HCT116 (cell line): ENCODE measurements at regions of chr7 and their contacts with region 1.

Region 1: DNA sequence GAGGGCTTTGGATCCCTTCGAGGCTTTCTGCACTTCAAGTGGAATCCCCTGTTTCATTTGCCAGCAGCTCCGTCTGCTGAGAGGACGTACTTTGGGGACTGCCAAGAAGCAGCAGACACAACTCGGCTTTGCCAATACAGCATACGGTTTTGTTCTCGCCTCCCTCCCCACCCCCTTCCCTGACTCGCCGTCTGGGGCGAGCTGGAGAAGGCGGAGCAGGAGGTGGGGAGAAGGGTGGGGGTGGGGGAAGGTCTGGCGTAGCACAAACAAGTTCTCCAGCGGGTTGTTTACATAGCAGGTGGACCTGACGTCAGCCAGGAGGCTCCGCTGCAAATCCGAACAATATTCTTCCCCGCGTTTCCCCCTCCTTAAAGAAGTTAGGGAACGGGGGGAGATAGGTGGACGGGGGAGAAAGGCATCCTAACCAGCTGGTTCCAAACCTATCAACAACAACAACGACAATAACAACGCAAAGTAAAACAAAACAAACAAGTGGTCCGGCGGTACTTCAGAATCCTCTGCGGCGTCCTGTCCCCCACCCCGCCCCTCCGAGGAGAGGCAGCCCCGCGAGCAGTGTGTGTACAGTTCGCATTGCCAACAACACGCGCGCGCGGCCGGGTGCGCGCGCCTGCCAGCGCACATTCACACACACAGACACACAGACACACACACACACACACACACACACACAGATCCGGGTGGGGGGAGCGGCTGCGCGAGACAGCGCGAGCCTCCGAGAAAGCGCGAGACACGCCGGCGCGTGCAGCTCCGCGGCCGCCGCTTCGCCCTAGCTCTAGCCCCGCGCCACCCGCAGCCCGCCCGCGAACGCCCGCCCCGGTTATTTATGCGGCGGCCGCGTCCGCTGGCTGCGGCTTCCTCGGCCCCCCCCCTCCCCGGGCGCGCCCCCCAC is 167.0 kb upstream of the PPP1R3A start:
- DNase-seq: peak; percentile 64
- ATAC-seq: peak; percentile 79
- H3K4me3 ChIP-seq: peak overlapping the region; percentile 59 to 80
- H3K27ac ChIP-seq: no peak overlapping the region; the same call in 1 of the 2 replicates
- H3K4me1 ChIP-seq: peaks cover 4 to 27% of the 10 kb centered on the region in 2 experiments; a peak in 3 of 4 replicates
- H3K27me3 ChIP-seq: no peaks in the 10 kb centered on the region
- CTCF ChIP-seq: no peak
- POLR2A ChIP-seq: no peak
- RAD21 ChIP-seq: no peak

Region 2: GRCh38 chr7:113179313-113179712 is 906.5 kb before region 1 on chr7:
- CTCF ChIA-PET with region 1: no interaction called
- POLR2A ChIA-PET with region 1: no interaction called
- RAD21 ChIA-PET with region 1: no interaction called
- intact Hi-C with region 1: no loop called
- DNase-seq: no peak
- ATAC-seq: no peak
- H3K4me3 ChIP-seq: no peak overlapping the region
- H3K27ac ChIP-seq: no peak overlapping the region
- H3K4me1 ChIP-seq: no peaks in the 10 kb centered on the region
- H3K27me3 ChIP-seq: no peaks in the 10 kb centered on the region
- CTCF ChIP-seq: no peak
- POLR2A ChIP-seq: no peak
- RAD21 ChIP-seq: no peak

Region 3: GRCh38 chr7:114217026-114217425 is 131.2 kb after region 1 on chr7:
- CTCF ChIA-PET with region 1: no interaction called
- POLR2A ChIA-PET with region 1: no interaction called
- RAD21 ChIA-PET with region 1: interaction called in 1 of 2 experiments, 3 read pairs
- intact Hi-C with region 1: loop called (anchors 2 kb)
- DNase-seq: peak; percentile 7
- ATAC-seq: peak; percentile 62
- H3K4me3 ChIP-seq: no peak overlapping the region
- H3K27ac ChIP-seq: no peak overlapping the region
- H3K4me1 ChIP-seq: no peaks in the 10 kb centered on the region
- H3K27me3 ChIP-seq: no peaks in the 10 kb centered on the region
- CTCF ChIP-seq: peak in 2 of 3 experiments; percentile 24 to 29; a peak in 2 of 6 replicates
- POLR2A ChIP-seq: no peak
- RAD21 ChIP-seq: peak; percentile 54

Region 4: DNA sequence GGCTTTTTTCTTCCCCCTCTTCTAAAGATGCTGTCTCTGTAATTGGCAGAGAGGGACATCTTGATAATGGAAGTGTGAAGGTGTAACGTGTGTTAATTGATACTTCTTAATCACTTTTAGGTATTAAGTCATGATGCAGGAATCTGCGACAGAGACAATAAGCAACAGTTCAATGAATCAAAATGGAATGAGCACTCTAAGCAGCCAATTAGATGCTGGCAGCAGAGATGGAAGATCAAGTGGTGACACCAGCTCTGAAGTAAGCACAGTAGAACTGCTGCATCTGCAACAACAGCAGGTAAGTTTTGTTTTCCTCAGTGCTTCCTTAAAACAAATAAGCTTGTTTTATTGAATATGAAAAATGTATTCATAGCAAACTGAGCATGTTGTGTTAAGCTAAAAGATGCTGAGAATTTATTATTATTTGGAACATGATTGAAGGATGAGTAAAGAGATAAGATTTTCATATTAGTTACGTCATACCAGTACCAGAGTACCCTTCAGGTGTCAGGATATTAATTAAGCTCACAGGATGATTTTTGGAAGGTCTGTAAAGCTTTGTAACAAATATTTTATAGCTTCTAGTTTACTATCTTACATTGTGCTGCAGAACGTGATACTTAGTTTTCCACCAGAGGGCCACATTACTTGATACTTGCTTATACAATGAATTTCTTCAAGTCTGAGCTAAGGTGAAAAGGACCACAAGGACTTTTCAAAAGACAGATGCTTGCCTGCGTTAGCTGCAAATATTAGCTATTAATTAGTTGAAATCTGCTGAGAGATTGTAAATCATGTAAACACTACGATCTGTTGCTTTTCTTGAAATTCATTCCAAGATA is 340.8 kb after region 1 on chr7:
- CTCF ChIA-PET with region 1: interaction called, 14 read pairs
- POLR2A ChIA-PET with region 1: no interaction called
- RAD21 ChIA-PET with region 1: interaction called in 1 of 2 experiments, 6 read pairs
- intact Hi-C with region 1: no loop called
- DNase-seq: peak; percentile 7
- ATAC-seq: 0 out of 2 replicates have a peak, but pooled peaks have one; percentile 63
- H3K4me3 ChIP-seq: no peak overlapping the region
- H3K27ac ChIP-seq: no peak overlapping the region
- H3K4me1 ChIP-seq: no peaks in the 10 kb centered on the region
- H3K27me3 ChIP-seq: no peaks in the 10 kb centered on the region
- CTCF ChIP-seq: peak; percentile 27 to 57 (median 42); a peak in 5 of 6 replicates
- POLR2A ChIP-seq: no peak
- RAD21 ChIP-seq: peak; percentile 49

Region 5: GRCh38 chr7:114663502-114663901 is 577.7 kb after region 1 on chr7:
- CTCF ChIA-PET with region 1: interaction called, 15 read pairs
- POLR2A ChIA-PET with region 1: interaction called, 3 read pairs
- RAD21 ChIA-PET with region 1: interaction called in 1 of 2 experiments, 3 read pairs
- intact Hi-C with region 1: loop called (anchors 1 kb)
- DNase-seq: peak; percentile 46
- ATAC-seq: peak; percentile 63; the same call in 1 of the 2 replicates
- H3K4me3 ChIP-seq: no peak overlapping the region
- H3K27ac ChIP-seq: no peak overlapping the region
- H3K4me1 ChIP-seq: no peaks in the 10 kb centered on the region
- H3K27me3 ChIP-seq: no peaks in the 10 kb centered on the region
- CTCF ChIP-seq: peak; percentile 26 to 47 (median 37); a peak in 3 of 6 replicates
- POLR2A ChIP-seq: no peak
- RAD21 ChIP-seq: peak; percentile 62

Region 6: GRCh38 chr7:115679976-115680375 is 1594.1 kb after region 1 on chr7:
- CTCF ChIA-PET with region 1: interaction called, 13 read pairs
- POLR2A ChIA-PET with region 1: no interaction called
- RAD21 ChIA-PET with region 1: interaction called in 1 of 2 experiments, 4 read pairs
- intact Hi-C with region 1: loop called (anchors 10 kb)
- DNase-seq: peak; percentile 38
- ATAC-seq: peak; percentile 83
- H3K4me3 ChIP-seq: no peak overlapping the region
- H3K27ac ChIP-seq: no peak overlapping the region
- H3K4me1 ChIP-seq: peaks cover 0 to 7% of the 10 kb centered on the region in 2 experiments; a peak in 1 of 4 replicates
- H3K27me3 ChIP-seq: no peaks in the 10 kb centered on the region
- CTCF ChIP-seq: peak; percentile 44 to 63 (median 62); a peak in 5 of 6 replicates
- POLR2A ChIP-seq: no peak
- RAD21 ChIP-seq: peak; percentile 47

Region 7: GRCh38 chr7:115910541-115911164 is 1824.8 kb after region 1 on chr7:
- CTCF ChIA-PET with region 1: interaction called, 4 read pairs
- POLR2A ChIA-PET with region 1: no interaction called
- RAD21 ChIA-PET with region 1: no interaction called
- intact Hi-C with region 1: loop called (anchors 1 kb)
- DNase-seq: peak; percentile 41
- ATAC-seq: peak; percentile 75
- H3K4me3 ChIP-seq: no peak overlapping the region
- H3K27ac ChIP-seq: no peak overlapping the region
- H3K4me1 ChIP-seq: peaks cover 0 to 7% of the 10 kb centered on the region in 2 experiments; a peak in 1 of 4 replicates
- H3K27me3 ChIP-seq: no peaks in the 10 kb centered on the region
- CTCF ChIP-seq: peak; percentile 58 to 72 (median 65); a peak in 5 of 6 replicates
- POLR2A ChIP-seq: no peak
- RAD21 ChIP-seq: peak; percentile 80